Activated CD4-positive, alpha-beta T cell treated with anti-CD3 and anti-CD28 coated beads, Interleukin-2, amount 10 ng/mL, durations not matched to agents 7 days and 5 days (primary cell): ENCODE measurements at regions of chr3 and their contacts with region 1.

Region 1: DNA sequence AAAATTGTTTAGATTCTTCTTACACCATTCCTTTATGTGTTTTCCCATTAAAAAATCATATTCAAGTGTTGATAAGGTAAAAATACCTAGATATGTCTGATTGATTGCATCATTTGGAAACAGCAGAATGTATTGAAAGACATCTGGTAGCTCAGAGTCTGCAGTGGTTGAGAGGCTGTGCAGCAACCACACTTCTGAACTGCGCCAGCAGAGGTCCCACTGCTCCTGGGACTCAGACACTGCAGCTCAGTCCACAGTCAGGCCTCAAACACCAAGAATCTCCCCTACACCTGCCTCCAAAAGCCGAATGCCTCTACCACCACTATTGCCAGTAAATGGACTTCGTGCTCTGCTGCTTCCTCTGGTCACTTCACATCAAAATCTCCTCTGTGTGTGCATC is 176.9 kb upstream of the LMCD1 start:
- DNase-seq: peak; percentile 57
- H3K4me3 Mint-ChIP-seq: no peak overlapping the region
- H3K27ac Mint-ChIP-seq: no peak overlapping the region
- H3K4me1 Mint-ChIP-seq: no peaks in the 10 kb centered on the region
- H3K27me3 Mint-ChIP-seq: no peaks in the 10 kb centered on the region

Region 2: GRCh38 chr3:8201886-8202285 is 122.9 kb before region 1 on chr3:
- CTCF ChIA-PET with region 1: no interaction called
- POLR2A ChIA-PET with region 1: no interaction called
- DNase-seq: no peak
- H3K4me3 Mint-ChIP-seq: no peak overlapping the region
- H3K27ac Mint-ChIP-seq: no peak overlapping the region
- H3K4me1 Mint-ChIP-seq: no peaks in the 10 kb centered on the region
- H3K27me3 Mint-ChIP-seq: no peaks in the 10 kb centered on the region

Region 3: GRCh38 chr3:8278448-8278847 is 46.3 kb before region 1 on chr3:
- CTCF ChIA-PET with region 1: no interaction called
- POLR2A ChIA-PET with region 1: no interaction called
- DNase-seq: no peak
- H3K4me3 Mint-ChIP-seq: no peak overlapping the region
- H3K27ac Mint-ChIP-seq: no peak overlapping the region
- H3K4me1 Mint-ChIP-seq: no peaks in the 10 kb centered on the region
- H3K27me3 Mint-ChIP-seq: no peaks in the 10 kb centered on the region

Region 4: GRCh38 chr3:8416965-8417364 is 92.2 kb after region 1 on chr3:
- CTCF ChIA-PET with region 1: interaction called, 26 read pairs
- POLR2A ChIA-PET with region 1: no interaction called
- DNase-seq: no peak
- H3K4me3 Mint-ChIP-seq: no peak overlapping the region
- H3K27ac Mint-ChIP-seq: no peak overlapping the region
- H3K4me1 Mint-ChIP-seq: peaks cover 5% of the 10 kb centered on the region
- H3K27me3 Mint-ChIP-seq: no peaks in the 10 kb centered on the region